K562 (cell line): ENCODE measurements at regions of chr6 and their contacts with region 1.

Region 1: GRCh38 chr6:125082908-125083683 is 70.5 kb upstream of the TPD52L1 start:
- DNase-seq: peak; percentile 57 to 95 (median 70)
- ATAC-seq: peak; percentile 91
- H3K4me3 ChIP-seq: no peak overlapping the region
- H3K27ac ChIP-seq: peak overlapping the region; percentile 86
- H3K4me1 ChIP-seq: peaks cover 3 to 59% of the 10 kb centered on the region in 2 experiments
- H3K27me3 ChIP-seq: no peaks in the 10 kb centered on the region
- CTCF ChIP-seq: no peak
- EP300 ChIP-seq: peak; percentile 97
- POLR2A ChIP-seq: no peak
- RAD21 ChIP-seq: peak in 1 of 2 experiments; percentile 31; a peak in 2 of 4 replicates

Region 2: DNA sequence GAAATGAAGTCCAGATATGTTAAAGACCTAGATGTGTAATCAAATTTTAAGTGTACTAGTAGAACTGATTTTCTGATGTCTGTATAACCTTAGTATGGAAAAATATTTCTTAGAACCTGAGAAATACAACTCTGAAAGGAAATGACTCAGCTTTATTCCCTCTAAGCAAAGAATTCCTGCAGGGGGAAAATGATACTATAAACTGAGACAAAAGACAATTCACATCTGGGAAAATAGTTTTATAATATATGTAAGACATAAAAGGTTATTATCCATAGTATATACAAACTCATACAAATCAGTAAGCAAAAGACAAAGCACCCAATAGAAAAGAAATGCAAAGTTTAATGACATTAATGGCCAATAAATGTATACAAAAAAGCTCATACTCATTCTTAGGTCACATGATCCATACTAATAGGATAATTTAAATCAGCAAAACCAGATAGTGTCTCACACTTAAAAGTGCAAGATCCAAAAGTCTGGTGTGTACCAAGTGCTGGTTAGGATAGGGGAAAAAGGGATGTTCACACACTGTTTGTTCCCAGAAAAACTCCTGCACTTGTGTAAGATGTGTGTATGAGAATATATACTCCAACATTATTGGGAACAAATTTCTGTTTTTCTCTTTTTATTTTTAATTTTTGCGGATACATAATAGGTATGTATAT is 98.3 kb before region 1 on chr6:
- CTCF ChIA-PET with region 1: no interaction called
- POLR2A ChIA-PET with region 1: no interaction called
- in situ Hi-C with region 1: no loop called
- intact Hi-C with region 1: loop called (anchors 5 kb)
- DNase-seq: no peak
- ATAC-seq: no peak
- H3K4me3 ChIP-seq: no peak overlapping the region
- H3K27ac ChIP-seq: no peak overlapping the region
- H3K4me1 ChIP-seq: peaks cover 10 to 21% of the 10 kb centered on the region in 2 experiments
- H3K27me3 ChIP-seq: no peaks in the 10 kb centered on the region
- CTCF ChIP-seq: no peak
- EP300 ChIP-seq: no peak
- POLR2A ChIP-seq: no peak
- RAD21 ChIP-seq: no peak

Region 3: GRCh38 chr6:125013938-125014660 is 69.0 kb before region 1 on chr6:
- CTCF ChIA-PET with region 1: no interaction called
- POLR2A ChIA-PET with region 1: no interaction called
- in situ Hi-C with region 1: no loop called
- intact Hi-C with region 1: loop called (anchors 5 kb)
- DNase-seq: peak in 1 of 4 experiments; percentile 32
- ATAC-seq: peak; percentile 84
- H3K4me3 ChIP-seq: no peak overlapping the region
- H3K27ac ChIP-seq: peak overlapping the region; percentile 41
- H3K4me1 ChIP-seq: peaks cover 0 to 16% of the 10 kb centered on the region in 2 experiments; a peak in 3 of 5 replicates
- H3K27me3 ChIP-seq: no peaks in the 10 kb centered on the region
- CTCF ChIP-seq: no peak
- EP300 ChIP-seq: peak; percentile 77
- POLR2A ChIP-seq: no peak; the same call in 1 of the 2 replicates
- RAD21 ChIP-seq: peak in 1 of 2 experiments; percentile 22; a peak in 1 of 4 replicates